ENCODE measurements at regions of chr19 and their contacts with region 1.

Region 1: GRCh38 chr19:51422053-51422448 is 4.6 kb upstream of the SIGLEC10 start:
- DNase-seq: peak; percentile 97
- H3K4me3 Mint-ChIP-seq: peak overlapping the region; percentile 44
- H3K27ac Mint-ChIP-seq: peak overlapping the region; percentile 51
- H3K4me1 Mint-ChIP-seq: peaks cover 15% of the 10 kb centered on the region
- H3K27me3 Mint-ChIP-seq: peaks cover 19% of the 10 kb centered on the region

Region 2: DNA sequence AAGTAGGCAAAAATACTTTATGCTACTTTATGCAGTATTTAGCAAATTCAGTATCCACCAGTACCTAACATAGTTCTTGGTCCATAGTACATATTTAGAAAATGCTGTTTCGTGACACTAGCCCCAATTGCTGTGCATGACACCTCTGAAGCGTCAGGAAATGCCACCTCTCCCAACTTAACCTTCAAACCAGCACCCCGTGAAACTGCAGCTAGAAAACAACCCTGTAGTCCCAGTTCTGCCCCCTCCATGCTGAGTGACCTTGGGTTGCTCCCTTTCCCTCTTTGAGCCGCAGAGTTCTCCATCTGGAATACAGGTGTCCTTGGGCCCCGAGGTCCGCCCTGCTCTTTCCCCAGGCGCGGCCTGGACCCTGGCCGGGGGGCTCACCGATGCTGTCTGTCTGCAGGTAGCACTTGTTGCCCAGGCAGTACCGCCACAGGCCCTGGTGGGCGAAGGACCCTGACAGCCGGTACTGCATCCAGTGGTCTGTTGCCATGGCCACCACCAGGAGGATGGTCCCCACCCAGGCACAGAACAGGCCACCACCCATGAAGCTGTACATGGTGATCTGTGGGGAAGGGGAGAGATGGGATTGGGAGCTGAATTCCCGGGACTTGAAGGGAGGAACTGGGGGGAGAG is 35.0 kb before region 1 on chr19:
- intact Hi-C with region 1: no loop called
- DNase-seq: no peak
- H3K4me3 Mint-ChIP-seq: no peak overlapping the region
- H3K27ac Mint-ChIP-seq: no peak overlapping the region
- H3K4me1 Mint-ChIP-seq: peaks cover 19% of the 10 kb centered on the region
- H3K27me3 Mint-ChIP-seq: no peaks in the 10 kb centered on the region

Region 3: DNA sequence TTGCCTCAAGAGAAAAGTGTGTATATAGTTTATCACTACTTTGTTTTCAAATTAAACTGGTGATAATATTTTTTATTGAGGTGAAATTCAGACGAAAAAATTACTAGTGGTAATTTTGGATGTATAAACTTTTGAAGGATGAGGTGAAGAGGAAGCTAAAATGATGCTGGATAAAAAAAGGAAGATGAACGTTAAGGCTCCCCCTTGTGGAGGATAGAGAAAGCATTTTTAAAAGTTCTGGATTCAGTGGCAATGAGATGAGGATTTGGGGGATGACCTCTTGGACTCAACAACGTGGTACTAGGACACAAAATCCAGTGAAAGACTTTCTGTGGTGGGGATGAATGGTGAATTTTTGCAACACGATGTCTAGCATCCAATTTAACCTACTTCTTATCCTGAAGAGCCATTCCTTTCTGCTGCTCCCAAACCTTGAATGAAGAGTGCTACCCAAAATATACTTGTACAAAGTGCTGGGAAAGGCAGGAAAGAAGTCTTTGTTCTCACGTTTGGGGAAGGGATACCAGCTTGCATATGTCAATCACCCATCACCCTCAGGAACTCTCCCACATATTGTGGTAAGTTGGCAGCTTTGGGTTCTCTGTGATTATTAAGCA is 215.4 kb after region 1 on chr19:
- intact Hi-C with region 1: loop called (anchors 1 kb)
- DNase-seq: no peak
- H3K4me3 Mint-ChIP-seq: no peak overlapping the region
- H3K27ac Mint-ChIP-seq: no peak overlapping the region
- H3K4me1 Mint-ChIP-seq: no peaks in the 10 kb centered on the region
- H3K27me3 Mint-ChIP-seq: peaks cover 32% of the 10 kb centered on the region

Region 4: DNA sequence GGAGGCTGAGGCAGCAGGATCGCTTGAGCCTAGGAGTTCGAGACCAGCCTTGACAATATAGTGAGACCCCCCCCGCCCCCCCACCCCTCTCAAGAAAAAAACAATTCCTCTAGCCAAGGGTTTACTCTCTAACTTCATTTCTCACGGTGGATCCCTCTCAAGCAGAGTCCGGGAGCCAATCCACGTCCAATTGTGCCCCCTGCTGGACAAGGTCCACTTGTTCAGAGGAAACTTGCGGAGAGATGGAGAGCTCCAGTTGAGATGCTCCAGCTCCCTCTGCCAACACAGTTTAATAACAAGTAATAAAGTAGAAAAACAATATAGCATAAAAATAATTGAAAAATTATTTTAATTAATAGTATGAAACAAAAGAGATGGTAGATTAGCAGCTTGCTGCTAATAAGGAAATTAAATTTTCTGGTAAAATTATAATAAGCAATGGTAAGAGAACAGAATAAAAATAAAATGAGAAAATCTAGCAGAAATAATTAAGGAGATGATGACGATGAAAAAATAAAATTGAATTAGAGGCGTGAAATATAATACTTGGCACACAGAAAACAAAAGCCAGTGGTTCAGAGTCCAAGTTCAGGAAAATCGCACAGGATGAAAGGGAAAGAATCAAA is 239.0 kb after region 1 on chr19:
- intact Hi-C with region 1: loop called (anchors 1 kb)
- DNase-seq: peak; percentile 84
- H3K4me3 Mint-ChIP-seq: no peak overlapping the region
- H3K27ac Mint-ChIP-seq: no peak overlapping the region
- H3K4me1 Mint-ChIP-seq: peaks cover 5% of the 10 kb centered on the region
- H3K27me3 Mint-ChIP-seq: peaks cover 23% of the 10 kb centered on the region

Measured in activated CD4-positive, alpha-beta T cell treated with anti-CD3 and anti-CD28 coated beads, Interleukin-2, amount 10 ng/mL, durations not matched to agents 24 days and 14 days (primary cell).